Head of caudate nucleus (tissue), 42 donors: ENCODE measurements at regions of chr16 and their contacts with region 1.

Region 1: GRCh38 chr16:69709456-69710084 is 16.8 kb downstream of the NQO1 start:
- DNase-seq: peak in 2 of 42 donors; percentile 42 to 58

Region 2: DNA sequence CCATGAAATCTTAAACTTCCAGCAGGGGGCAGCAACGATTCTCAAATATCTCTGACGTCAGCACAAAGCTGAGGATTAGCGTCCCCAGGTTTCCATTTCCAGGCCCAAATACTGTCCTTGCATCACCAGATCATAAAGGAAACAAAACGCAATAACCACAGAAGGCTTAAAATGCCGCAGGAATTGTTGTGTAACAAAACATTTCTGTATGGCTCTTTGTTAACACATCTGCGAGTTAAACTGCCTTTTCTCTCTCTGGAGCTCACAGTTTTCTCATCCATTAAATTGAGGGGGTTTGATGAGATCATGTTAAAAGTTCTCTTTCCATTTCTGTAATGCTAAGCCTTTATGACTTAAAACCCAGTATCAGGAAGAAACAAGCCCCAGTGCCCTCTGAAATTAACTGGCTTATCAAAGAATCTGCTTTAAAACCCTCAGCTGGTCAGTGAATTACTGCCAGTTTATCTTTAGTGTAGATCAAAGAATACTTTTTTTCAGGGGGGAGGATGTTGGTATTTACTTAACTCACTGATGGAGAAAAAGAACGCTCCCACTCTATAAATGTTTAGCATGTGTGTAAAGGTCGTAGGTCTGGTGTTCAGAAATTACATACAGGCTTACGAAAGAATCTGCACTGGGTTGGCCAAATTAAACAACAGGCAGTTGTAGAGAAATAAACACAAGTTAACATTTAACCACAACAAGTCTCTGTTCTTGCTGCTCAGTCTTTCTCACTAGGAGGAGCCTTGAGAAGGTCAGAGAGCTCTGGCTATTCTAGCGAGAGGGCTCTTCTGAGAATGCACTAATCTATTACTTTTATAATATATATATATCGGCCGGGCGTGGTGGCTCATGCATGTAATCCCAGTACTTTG is 313.1 kb before region 1 on chr16:
- intact Hi-C with region 1: loop called (anchors 5 kb)
- DNase-seq: peak in 41 of 42 donors; percentile 30 to 93 (median 74)

Region 3: GRCh38 chr16:69595127-69596036 is 114.2 kb before region 1 on chr16:
- intact Hi-C with region 1: no loop called
- DNase-seq: no peak

Region 4: DNA sequence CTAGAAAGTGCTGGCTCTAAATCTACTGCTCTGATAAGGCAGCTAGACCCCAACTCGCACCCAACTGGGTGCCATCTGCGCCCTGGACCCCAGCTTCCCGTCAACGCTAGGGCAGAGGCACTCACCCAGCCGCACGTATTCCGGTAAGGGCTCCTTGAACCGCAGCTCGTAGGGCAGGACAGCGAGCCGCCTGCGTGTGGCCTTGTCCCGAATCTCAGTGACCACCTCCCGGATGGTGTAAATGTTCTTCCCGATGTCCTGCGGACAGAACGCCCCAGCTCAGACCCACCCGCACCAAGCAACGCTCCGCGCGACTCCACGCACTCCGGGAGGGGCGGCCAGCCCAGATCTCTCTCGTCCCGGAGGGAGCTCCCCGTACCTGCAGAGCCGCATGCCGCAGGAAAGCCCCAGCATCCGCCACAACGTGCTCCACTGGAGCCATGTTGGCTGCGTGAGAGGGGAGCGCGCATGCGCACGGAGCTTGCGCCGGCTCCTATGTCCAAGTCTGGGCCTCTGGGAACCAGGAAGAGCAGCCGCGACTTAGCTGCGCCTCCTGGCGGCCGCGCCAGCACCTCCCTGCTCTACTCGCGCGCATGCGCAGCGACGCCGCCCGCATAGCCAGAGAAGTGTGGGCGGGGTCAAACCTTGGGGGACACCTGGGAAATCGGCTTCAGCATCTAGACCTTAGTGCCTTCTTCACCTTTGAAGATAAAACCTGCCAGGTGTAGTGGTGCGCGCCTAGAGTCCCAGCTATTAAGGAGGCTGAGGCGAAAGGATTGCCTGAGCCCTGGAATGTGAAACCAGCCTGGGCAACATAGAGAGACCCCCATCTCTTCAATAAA is 45.1 kb after region 1 on chr16 and contains the start of gene NOB1:
- intact Hi-C with region 1: loop called (anchors 2 kb)
- DNase-seq: peak; percentile 89 to 99 (median 96)